ENCODE measurements at regions of chr3 and their contacts with region 1.

Region 1: GRCh38 chr3:177197041-177197727 is at the start of gene TBL1XR1:
- DNase-seq: peak; percentile 78 to 95 (median 86)
- ATAC-seq: peak; percentile 48
- H3K4me3 ChIP-seq: peak within 1 kb of the TSS; percentile 86 to 93
- H3K4me3 Mint-ChIP-seq: peak within 1 kb of the TSS; percentile 99
- H3K27ac ChIP-seq: peak within 1 kb of the TSS; percentile 81 to 85
- H3K27ac Mint-ChIP-seq: peak within 1 kb of the TSS; percentile 99
- H3K4me1 ChIP-seq: peaks cover 56% of the 10 kb centered on the region
- H3K4me1 Mint-ChIP-seq: peaks cover 65% of the 10 kb centered on the region
- H3K27me3 ChIP-seq: no peaks in the 10 kb centered on the region
- H3K27me3 Mint-ChIP-seq: no peaks in the 10 kb centered on the region
- CTCF ChIP-seq: no peak
- total RNA-seq, gene TBL1XR1: 64.8 to 68.4 TPM

Region 2: GRCh38 chr3:176872771-176873209 is 324.4 kb before region 1 on chr3:
- CTCF ChIA-PET with region 1: no interaction called
- POLR2A ChIA-PET with region 1: no interaction called
- intact Hi-C with region 1: loop called in 1 of 2 experiments (anchors 5 kb)
- DNase-seq: peak; percentile 11 to 70 (median 55)
- ATAC-seq: peak; percentile 82
- H3K4me3 ChIP-seq: no peak overlapping the region
- H3K4me3 Mint-ChIP-seq: no peak overlapping the region
- H3K27ac ChIP-seq: no peak overlapping the region
- H3K27ac Mint-ChIP-seq: no peak overlapping the region
- H3K4me1 ChIP-seq: no peaks in the 10 kb centered on the region
- H3K4me1 Mint-ChIP-seq: peaks cover 4% of the 10 kb centered on the region
- H3K27me3 ChIP-seq: no peaks in the 10 kb centered on the region
- H3K27me3 Mint-ChIP-seq: peaks cover 4% of the 10 kb centered on the region
- CTCF ChIP-seq: peak; percentile 66

Region 3: GRCh38 chr3:177109688-177110330 is 87.4 kb before region 1 on chr3:
- CTCF ChIA-PET with region 1: no interaction called
- POLR2A ChIA-PET with region 1: no interaction called
- intact Hi-C with region 1: loop called in 1 of 2 experiments (anchors 5 kb)
- DNase-seq: peak in 2 of 9 experiments; percentile 30 to 63
- ATAC-seq: peak; percentile 95
- H3K4me3 ChIP-seq: no peak overlapping the region
- H3K4me3 Mint-ChIP-seq: peak overlapping the region; percentile 33
- H3K27ac ChIP-seq: peak overlapping the region; percentile 18 to 27
- H3K27ac Mint-ChIP-seq: peak overlapping the region; percentile 90
- H3K4me1 ChIP-seq: peaks cover 46% of the 10 kb centered on the region
- H3K4me1 Mint-ChIP-seq: peaks cover 76% of the 10 kb centered on the region
- H3K27me3 ChIP-seq: no peaks in the 10 kb centered on the region
- H3K27me3 Mint-ChIP-seq: no peaks in the 10 kb centered on the region
- CTCF ChIP-seq: no peak

Region 4: DNA sequence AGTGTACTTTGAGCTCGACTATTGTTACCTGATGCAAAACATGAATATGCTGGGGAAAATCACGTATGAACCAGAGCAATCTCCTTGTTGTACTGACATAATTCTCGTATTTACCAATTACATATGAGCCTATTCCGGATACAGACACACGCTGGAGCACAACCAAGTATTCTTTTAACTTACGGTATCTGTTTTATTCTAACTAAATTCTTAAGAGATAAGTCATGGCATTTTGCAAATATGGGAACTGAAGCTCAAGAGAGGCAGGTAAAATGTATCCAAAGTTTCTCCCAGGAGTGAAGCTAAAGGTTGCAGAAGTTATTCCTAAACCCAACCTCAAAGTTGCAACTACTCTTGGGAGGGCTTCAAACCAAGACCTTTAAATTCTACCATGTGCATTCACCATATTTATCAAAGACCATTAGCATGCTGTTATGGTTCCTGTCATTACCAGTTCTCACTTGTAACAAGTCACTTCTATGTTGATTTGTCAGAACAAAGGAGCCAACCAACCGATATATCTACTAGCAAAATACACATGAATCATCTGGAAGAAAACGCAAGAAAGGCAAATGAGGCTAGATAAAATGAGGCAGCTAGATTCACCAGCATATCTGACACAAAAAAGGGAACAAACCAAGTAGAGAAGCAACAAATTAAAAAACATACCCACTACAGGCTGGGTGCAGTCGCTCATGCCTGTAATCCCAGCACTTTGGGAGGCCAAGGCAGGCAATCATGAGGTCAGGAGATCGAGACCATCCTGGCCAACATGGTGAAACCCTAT is 17.7 kb before region 1 on chr3:
- CTCF ChIA-PET with region 1: no interaction called
- POLR2A ChIA-PET with region 1: interaction called, 3 read pairs
- intact Hi-C with region 1: loop called (anchors 2 kb)
- DNase-seq: no peak
- ATAC-seq: no peak
- H3K4me3 ChIP-seq: no peak overlapping the region
- H3K4me3 Mint-ChIP-seq: peak overlapping the region; percentile 2
- H3K27ac ChIP-seq: no peak overlapping the region
- H3K27ac Mint-ChIP-seq: peak overlapping the region; percentile 66
- H3K4me1 ChIP-seq: peaks cover 42% of the 10 kb centered on the region
- H3K4me1 Mint-ChIP-seq: peaks cover 75% of the 10 kb centered on the region
- H3K27me3 ChIP-seq: no peaks in the 10 kb centered on the region
- H3K27me3 Mint-ChIP-seq: no peaks in the 10 kb centered on the region
- CTCF ChIP-seq: no peak

Region 5: GRCh38 chr3:177306252-177306651 is 109.1 kb after region 1 on chr3:
- CTCF ChIA-PET with region 1: no interaction called
- POLR2A ChIA-PET with region 1: interaction called, 3 read pairs
- intact Hi-C with region 1: loop called in 1 of 2 experiments (anchors 5 kb)
- DNase-seq: no peak
- ATAC-seq: no peak
- H3K4me3 ChIP-seq: no peak overlapping the region
- H3K4me3 Mint-ChIP-seq: no peak overlapping the region
- H3K27ac ChIP-seq: no peak overlapping the region
- H3K27ac Mint-ChIP-seq: no peak overlapping the region
- H3K4me1 ChIP-seq: no peaks in the 10 kb centered on the region
- H3K4me1 Mint-ChIP-seq: no peaks in the 10 kb centered on the region
- H3K27me3 ChIP-seq: no peaks in the 10 kb centered on the region
- H3K27me3 Mint-ChIP-seq: no peaks in the 10 kb centered on the region
- CTCF ChIP-seq: no peak

Region 6: DNA sequence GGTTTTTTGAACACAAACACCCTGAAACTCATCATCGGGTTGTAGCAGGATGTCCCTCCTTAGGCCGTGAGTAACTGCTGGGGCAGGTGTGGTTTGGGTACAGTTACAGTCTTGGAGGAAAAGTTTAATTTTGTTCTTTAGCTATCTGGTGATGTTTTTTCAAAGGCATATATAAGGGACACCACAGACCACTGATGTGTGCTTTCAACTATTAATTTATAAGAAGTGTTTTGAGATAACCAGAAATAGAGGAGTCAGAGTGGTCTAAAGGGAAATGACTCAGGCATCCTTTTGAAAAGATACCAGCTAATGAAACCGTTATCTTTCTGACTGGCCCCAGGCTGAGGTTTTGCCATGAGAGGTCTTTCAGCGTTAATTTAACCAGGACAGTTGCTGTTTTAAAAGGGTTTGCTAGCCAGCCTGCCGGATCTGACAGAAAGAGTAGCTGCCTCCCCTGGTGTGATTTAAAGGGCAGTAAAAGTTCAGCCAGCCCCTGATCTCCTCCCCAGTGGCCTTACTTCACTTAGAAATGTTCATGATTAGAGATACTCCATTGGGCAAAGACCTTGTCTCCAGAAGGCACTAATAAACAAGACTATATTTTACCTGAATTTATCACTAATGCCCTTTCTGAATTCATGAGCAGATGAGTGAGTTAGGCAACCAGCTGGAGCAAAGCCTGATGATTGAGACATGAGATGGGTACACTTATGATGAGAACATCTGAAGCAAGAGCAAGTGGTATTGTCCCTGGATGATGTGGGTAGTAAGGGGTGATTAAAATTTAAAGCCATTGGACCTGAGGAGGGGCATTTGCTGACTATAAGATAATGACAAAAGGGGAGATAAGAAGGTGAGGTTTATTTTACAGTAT is 482.6 kb after region 1 on chr3:
- CTCF ChIA-PET with region 1: no interaction called
- POLR2A ChIA-PET with region 1: no interaction called
- intact Hi-C with region 1: loop called in 1 of 2 experiments (anchors 5 kb)
- DNase-seq: peak in 4 of 9 experiments; percentile 7 to 48 (median 23)
- ATAC-seq: peak; percentile 26
- H3K4me3 ChIP-seq: no peak overlapping the region
- H3K4me3 Mint-ChIP-seq: no peak overlapping the region
- H3K27ac ChIP-seq: peak overlapping the region in 1 of 2 experiments; percentile 60
- H3K27ac Mint-ChIP-seq: peak overlapping the region; percentile 47
- H3K4me1 ChIP-seq: peaks cover 3% of the 10 kb centered on the region
- H3K4me1 Mint-ChIP-seq: peaks cover 32% of the 10 kb centered on the region
- H3K27me3 ChIP-seq: no peaks in the 10 kb centered on the region
- H3K27me3 Mint-ChIP-seq: no peaks in the 10 kb centered on the region
- CTCF ChIP-seq: no peak